MCF 10A (cell line): ENCODE measurements at regions of chr2 and their contacts with region 1.

Region 1: GRCh38 chr2:104872866-104873688 is 19.2 kb downstream of the POU3F3 start:
- DNase-seq: peak; percentile 84
- H3K4me3 Mint-ChIP-seq: peak overlapping the region; percentile 65
- H3K27ac Mint-ChIP-seq: no peak overlapping the region
- H3K4me1 Mint-ChIP-seq: no peaks in the 10 kb centered on the region
- H3K27me3 Mint-ChIP-seq: no peaks in the 10 kb centered on the region
- CTCF ChIP-seq: peak; percentile 65

Region 2: GRCh38 chr2:103288708-103289414 is 1584.2 kb before region 1 on chr2:
- CTCF ChIA-PET with region 1: no interaction called
- POLR2A ChIA-PET with region 1: no interaction called
- intact Hi-C with region 1: loop called (anchors 10 kb)
- DNase-seq: peak; percentile 10
- H3K4me3 Mint-ChIP-seq: no peak overlapping the region
- H3K27ac Mint-ChIP-seq: no peak overlapping the region
- H3K4me1 Mint-ChIP-seq: no peaks in the 10 kb centered on the region
- H3K27me3 Mint-ChIP-seq: peaks cover 96% of the 10 kb centered on the region
- CTCF ChIP-seq: peak; percentile 11

Region 3: DNA sequence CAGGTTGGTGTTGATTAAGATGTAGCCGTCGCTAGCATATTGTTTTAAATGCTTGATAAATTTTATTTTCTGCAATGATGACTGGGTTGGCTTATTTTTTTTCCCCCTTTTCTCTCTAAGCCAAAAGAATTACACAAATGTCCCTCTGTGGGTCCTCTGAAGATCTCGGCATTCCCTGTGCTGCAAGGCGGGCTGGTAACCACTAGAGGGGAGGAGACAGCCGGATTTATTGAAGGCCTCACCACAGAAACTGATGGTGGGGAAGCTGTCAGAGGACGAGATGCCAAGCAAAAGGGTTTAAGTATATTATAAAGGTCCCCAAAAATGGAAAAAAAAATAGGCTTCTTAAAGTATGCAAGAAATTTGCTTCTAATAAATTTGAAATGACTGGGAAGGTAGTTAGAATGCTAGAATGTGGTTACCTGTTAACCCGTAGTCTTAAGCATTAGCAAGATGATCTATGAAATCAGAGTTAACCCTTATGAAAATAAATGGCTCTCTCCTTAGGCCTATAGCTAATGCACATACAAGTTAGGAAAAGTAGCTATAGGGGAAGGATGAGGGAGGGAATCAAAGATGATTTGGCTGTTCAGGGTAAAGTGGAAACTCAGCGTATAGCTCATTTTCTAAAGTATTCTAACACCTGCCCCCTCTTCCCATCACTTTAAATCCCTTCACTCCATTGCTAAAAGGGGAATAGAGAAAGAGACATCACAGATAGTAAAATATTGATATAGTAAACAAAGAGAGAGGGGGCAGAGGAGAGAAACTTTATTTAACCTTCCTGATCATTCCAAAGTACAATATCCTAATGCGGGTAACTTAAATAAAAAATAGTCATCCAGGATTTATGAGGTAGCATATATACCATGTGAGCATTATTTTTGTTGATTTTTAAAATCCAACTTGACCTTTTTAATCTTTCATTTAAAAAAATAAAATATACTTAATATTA is 913.6 kb before region 1 on chr2:
- CTCF ChIA-PET with region 1: interaction called, 12 read pairs
- POLR2A ChIA-PET with region 1: no interaction called
- intact Hi-C with region 1: loop called (anchors 1 kb)
- DNase-seq: peak; percentile 50
- H3K4me3 Mint-ChIP-seq: no peak overlapping the region
- H3K27ac Mint-ChIP-seq: no peak overlapping the region
- H3K4me1 Mint-ChIP-seq: no peaks in the 10 kb centered on the region
- H3K27me3 Mint-ChIP-seq: peaks cover 79% of the 10 kb centered on the region
- CTCF ChIP-seq: peak; percentile 65

Region 4: GRCh38 chr2:104033399-104033798 is 839.7 kb before region 1 on chr2:
- CTCF ChIA-PET with region 1: interaction called, 7 read pairs
- POLR2A ChIA-PET with region 1: no interaction called
- intact Hi-C with region 1: loop called (anchors 1 kb)
- DNase-seq: peak; percentile 30
- H3K4me3 Mint-ChIP-seq: no peak overlapping the region
- H3K27ac Mint-ChIP-seq: no peak overlapping the region
- H3K4me1 Mint-ChIP-seq: no peaks in the 10 kb centered on the region
- H3K27me3 Mint-ChIP-seq: peaks cover 86% of the 10 kb centered on the region
- CTCF ChIP-seq: peak; percentile 28

Region 5: DNA sequence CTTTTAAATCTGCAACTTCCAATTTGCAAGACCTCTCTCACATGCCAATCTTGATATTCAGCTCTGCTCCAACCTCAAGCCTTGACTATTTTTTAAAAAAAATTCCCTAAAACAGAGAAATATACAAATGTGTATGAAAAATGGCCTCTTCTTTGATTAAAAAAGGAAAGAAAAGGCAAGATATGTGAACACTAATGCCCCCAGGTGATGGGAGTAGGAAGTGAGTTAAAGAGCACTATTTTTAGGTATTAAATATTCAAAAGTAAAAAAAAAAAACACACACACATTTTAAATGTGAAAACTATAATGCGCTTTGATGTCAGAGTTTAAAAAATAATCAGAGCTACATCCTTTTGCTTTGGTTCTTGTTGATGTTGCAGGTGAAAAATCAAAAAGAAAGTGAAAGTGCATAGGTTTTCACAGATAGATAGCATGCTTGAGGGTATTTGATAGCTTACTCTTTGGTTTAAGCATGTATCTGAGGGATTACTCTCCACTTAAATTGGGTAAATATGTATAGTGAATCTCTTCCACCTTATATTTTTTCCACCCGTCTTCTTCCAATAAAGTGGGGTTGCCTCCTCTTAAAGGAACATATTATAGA is 425.1 kb before region 1 on chr2:
- CTCF ChIA-PET with region 1: interaction called, 5 read pairs
- POLR2A ChIA-PET with region 1: no interaction called
- intact Hi-C with region 1: loop called (anchors 10 kb)
- DNase-seq: peak; percentile 20
- H3K4me3 Mint-ChIP-seq: no peak overlapping the region
- H3K27ac Mint-ChIP-seq: no peak overlapping the region
- H3K4me1 Mint-ChIP-seq: peaks cover 8% of the 10 kb centered on the region
- H3K27me3 Mint-ChIP-seq: peaks cover 9% of the 10 kb centered on the region
- CTCF ChIP-seq: peak; percentile 10

Region 6: GRCh38 chr2:104793966-104794365 is 79.1 kb before region 1 on chr2:
- CTCF ChIA-PET with region 1: no interaction called
- POLR2A ChIA-PET with region 1: no interaction called
- intact Hi-C with region 1: no loop called
- DNase-seq: peak; percentile 59
- H3K4me3 Mint-ChIP-seq: no peak overlapping the region
- H3K27ac Mint-ChIP-seq: no peak overlapping the region
- H3K4me1 Mint-ChIP-seq: peaks cover 6% of the 10 kb centered on the region
- H3K27me3 Mint-ChIP-seq: peaks cover 24% of the 10 kb centered on the region
- CTCF ChIP-seq: no peak

Region 7: DNA sequence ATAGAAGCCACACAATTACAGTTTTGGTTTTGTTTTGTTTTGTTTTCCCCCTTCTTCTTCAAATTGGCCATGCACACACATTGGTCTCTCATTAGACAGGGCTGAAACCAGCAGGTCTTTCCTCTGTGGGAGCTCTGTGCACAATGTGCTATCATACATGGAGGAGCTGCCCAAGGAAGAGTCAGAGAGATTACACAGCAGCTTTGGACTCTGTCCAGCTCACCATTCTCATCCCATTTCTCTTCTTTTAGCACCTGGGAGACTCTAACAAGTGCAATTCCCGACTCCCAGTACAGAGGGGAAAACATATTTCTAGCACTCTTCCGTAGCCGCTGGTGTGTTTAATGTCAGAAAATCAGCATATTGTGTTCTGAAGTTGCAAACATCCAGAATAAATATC is 10.3 kb after region 1 on chr2:
- CTCF ChIA-PET with region 1: interaction called, 15 read pairs
- POLR2A ChIA-PET with region 1: no interaction called
- intact Hi-C with region 1: no loop called
- DNase-seq: peak; percentile 5
- H3K4me3 Mint-ChIP-seq: no peak overlapping the region
- H3K27ac Mint-ChIP-seq: no peak overlapping the region
- H3K4me1 Mint-ChIP-seq: peaks cover 8% of the 10 kb centered on the region
- H3K27me3 Mint-ChIP-seq: no peaks in the 10 kb centered on the region
- CTCF ChIP-seq: no peak

Region 8: GRCh38 chr2:104944495-104944894 is 71.4 kb after region 1 on chr2:
- CTCF ChIA-PET with region 1: interaction called, 12 read pairs
- POLR2A ChIA-PET with region 1: no interaction called
- intact Hi-C with region 1: no loop called
- DNase-seq: peak; percentile 66
- H3K4me3 Mint-ChIP-seq: no peak overlapping the region
- H3K27ac Mint-ChIP-seq: no peak overlapping the region
- H3K4me1 Mint-ChIP-seq: peaks cover 6% of the 10 kb centered on the region
- H3K27me3 Mint-ChIP-seq: no peaks in the 10 kb centered on the region
- CTCF ChIP-seq: peak; percentile 62